ENCODE measurements at regions of chr7 and their contacts with region 1.

Region 1: GRCh38 chr7:48109848-48110663 is 21.0 kb downstream of the UPP1 start:
- DNase-seq: peak; percentile 78
- H3K4me3 Mint-ChIP-seq: no peak overlapping the region
- H3K27ac Mint-ChIP-seq: no peak overlapping the region
- H3K4me1 Mint-ChIP-seq: peaks cover 22% of the 10 kb centered on the region
- H3K27me3 Mint-ChIP-seq: no peaks in the 10 kb centered on the region
- CTCF ChIP-seq: peak; percentile 97

Region 2: DNA sequence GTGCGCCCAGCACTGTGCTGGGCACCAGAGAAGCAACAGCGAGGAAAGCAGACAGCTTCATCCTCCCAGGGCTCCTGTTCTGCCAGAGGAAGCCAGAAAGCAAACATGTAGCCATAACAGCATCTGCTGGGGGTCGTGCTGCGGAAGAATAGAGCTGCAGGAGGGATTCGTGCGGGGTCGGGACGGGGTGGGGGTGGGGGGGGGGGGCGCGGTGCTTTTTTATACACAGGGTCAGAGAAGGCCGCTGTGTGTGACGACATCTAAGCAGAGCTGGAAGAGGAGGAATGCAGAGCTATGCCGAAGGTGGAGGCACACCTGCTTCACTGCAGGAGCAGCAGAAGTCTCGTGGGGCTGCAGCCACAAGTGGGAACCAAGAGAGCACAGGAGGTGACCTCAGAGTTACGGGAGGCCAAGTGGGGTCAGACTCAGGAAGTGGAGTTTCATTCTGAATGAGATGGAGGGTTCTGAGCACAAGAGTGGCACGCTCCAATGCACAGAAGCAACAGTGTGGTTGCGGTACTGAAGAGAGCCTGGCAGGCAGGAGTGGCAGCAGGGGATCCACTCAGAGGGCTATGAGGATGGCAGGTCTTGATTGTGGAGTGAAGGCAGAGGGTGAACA is 172.9 kb before region 1 on chr7:
- CTCF ChIA-PET with region 1: interaction called, 14 read pairs
- POLR2A ChIA-PET with region 1: no interaction called
- intact Hi-C with region 1: no loop called
- DNase-seq: no peak
- H3K4me3 Mint-ChIP-seq: no peak overlapping the region
- H3K27ac Mint-ChIP-seq: no peak overlapping the region
- H3K4me1 Mint-ChIP-seq: peaks cover 10% of the 10 kb centered on the region
- H3K27me3 Mint-ChIP-seq: no peaks in the 10 kb centered on the region
- CTCF ChIP-seq: no peak

Region 3: DNA sequence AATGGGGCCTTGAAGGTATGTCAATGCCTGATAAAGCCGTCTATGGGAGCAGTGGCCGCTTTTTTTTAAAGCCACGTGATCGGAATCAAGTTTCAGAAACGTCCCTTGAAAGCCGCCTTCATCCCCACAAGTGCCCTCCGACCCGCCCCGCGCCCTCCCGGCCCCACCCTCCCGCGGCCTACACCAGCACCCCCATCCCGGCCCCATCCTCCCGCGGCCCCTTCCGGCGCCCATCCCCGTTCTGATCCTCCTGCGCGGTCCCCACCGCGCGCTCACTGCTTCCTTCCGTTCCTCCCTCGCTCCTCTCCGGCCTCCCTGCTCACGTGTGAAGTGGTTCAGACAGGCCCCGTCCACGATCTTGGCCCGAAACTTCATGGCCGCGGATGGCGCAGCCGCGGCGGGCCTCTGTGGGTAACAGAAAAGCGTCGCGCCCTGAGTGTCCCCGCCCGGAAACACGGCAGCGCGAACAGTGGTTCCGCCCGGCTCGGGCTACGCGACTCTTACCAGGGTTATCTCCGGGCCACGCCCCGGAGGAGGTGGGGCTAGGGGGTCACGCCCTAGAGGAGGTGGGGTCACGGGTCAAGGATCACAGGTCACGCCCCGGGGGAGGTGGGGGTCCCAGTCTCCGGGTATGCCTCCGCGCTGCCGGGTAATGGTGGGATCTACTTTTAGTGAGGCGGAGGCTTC is 130.8 kb before region 1 on chr7 and contains the start of gene HUS1:
- CTCF ChIA-PET with region 1: interaction called, 12 read pairs
- POLR2A ChIA-PET with region 1: interaction called, 10 read pairs
- intact Hi-C with region 1: loop called (anchors 1 kb)
- DNase-seq: peak; percentile 86
- H3K4me3 Mint-ChIP-seq: peak within 1 kb of the TSS; percentile 81
- H3K27ac Mint-ChIP-seq: peak within 1 kb of the TSS; percentile 96
- H3K4me1 Mint-ChIP-seq: peaks cover 16% of the 10 kb centered on the region
- H3K27me3 Mint-ChIP-seq: no peaks in the 10 kb centered on the region
- CTCF ChIP-seq: no peak
- total RNA-seq, gene HUS1: 39.9 and 42.8 TPM in 2 replicates

Region 4: GRCh38 chr7:48035301-48035966 is 74.6 kb before region 1 on chr7 and contains the start of gene C7orf57:
- CTCF ChIA-PET with region 1: interaction called, 7 read pairs
- POLR2A ChIA-PET with region 1: no interaction called
- intact Hi-C with region 1: loop called (anchors 2 kb)
- DNase-seq: peak; percentile 82
- H3K4me3 Mint-ChIP-seq: peak within 1 kb of the TSS; percentile 74
- H3K27ac Mint-ChIP-seq: peak within 1 kb of the TSS; percentile 50
- H3K4me1 Mint-ChIP-seq: no peaks in the 10 kb centered on the region
- H3K27me3 Mint-ChIP-seq: no peaks in the 10 kb centered on the region
- CTCF ChIP-seq: no peak
- total RNA-seq, gene C7orf57: 0.37 and 0.52 TPM in 2 replicates

Region 5: GRCh38 chr7:48088559-48089045 is 21.5 kb before region 1 on chr7:
- CTCF ChIA-PET with region 1: interaction called, 26 read pairs
- POLR2A ChIA-PET with region 1: interaction called, 10 read pairs
- intact Hi-C with region 1: no loop called
- DNase-seq: peak; percentile 96
- H3K4me3 Mint-ChIP-seq: peak overlapping the region; percentile 83
- H3K27ac Mint-ChIP-seq: peak overlapping the region; percentile 88
- H3K4me1 Mint-ChIP-seq: peaks cover 53% of the 10 kb centered on the region
- H3K27me3 Mint-ChIP-seq: no peaks in the 10 kb centered on the region
- CTCF ChIP-seq: no peak

Region 6: GRCh38 chr7:48139459-48139858 is 29.4 kb after region 1 on chr7:
- CTCF ChIA-PET with region 1: interaction called, 21 read pairs
- POLR2A ChIA-PET with region 1: no interaction called
- intact Hi-C with region 1: no loop called
- DNase-seq: peak; percentile 24
- H3K4me3 Mint-ChIP-seq: no peak overlapping the region
- H3K27ac Mint-ChIP-seq: no peak overlapping the region
- H3K4me1 Mint-ChIP-seq: no peaks in the 10 kb centered on the region
- H3K27me3 Mint-ChIP-seq: peaks cover 14% of the 10 kb centered on the region
- CTCF ChIP-seq: peak; percentile 25

Region 7: GRCh38 chr7:49479441-49479840 is 1369.4 kb after region 1 on chr7:
- CTCF ChIA-PET with region 1: no interaction called
- POLR2A ChIA-PET with region 1: no interaction called
- intact Hi-C with region 1: no loop called
- DNase-seq: no peak
- H3K4me3 Mint-ChIP-seq: no peak overlapping the region
- H3K27ac Mint-ChIP-seq: no peak overlapping the region
- H3K4me1 Mint-ChIP-seq: no peaks in the 10 kb centered on the region
- H3K27me3 Mint-ChIP-seq: peaks cover 71% of the 10 kb centered on the region
- CTCF ChIP-seq: no peak

Measured in MCF 10A (cell line).